ENCODE measurements at regions of chr6 and their contacts with region 1.

Region 1: DNA sequence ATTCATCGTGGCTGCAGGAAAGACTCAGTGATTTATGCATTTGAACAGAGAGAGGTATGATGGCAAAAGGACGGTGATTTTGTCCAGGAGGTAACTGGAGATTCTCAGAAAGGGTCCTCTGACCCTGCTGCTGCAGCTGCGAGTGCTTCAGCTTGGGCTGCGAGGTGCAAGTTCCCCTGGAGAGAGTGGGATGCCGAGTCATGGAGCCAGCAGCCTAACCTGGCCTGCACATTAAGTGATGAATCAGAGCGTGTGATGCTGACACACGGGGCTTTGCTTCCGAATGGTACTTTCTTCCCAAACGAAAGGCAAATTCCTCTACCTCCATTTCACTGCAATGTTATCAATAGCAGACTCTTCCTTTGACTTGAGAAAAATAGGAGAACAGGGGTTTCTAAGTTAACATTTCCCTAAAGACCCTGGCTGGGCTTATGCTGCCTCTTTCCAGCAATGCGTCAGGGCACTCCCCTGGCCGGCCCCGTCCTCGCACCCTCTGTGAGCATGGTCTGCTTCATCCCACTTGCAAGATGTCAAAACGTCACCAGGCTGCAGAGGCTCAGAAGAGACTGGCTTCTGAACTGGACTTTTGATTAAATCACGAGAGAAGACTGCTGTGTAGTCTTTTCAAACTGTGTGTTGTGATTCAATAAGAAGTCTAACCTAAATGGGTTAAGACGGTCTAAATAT is 628.0 kb upstream of the AGPAT4 start:
- DNase-seq: no peak
- H3K4me3 ChIP-seq: no peak overlapping the region
- H3K27ac ChIP-seq: no peak overlapping the region
- H3K4me1 ChIP-seq: no peaks in the 10 kb centered on the region
- H3K27me3 ChIP-seq: no peaks in the 10 kb centered on the region
- CTCF ChIP-seq: no peak
- POLR2A ChIP-seq: no peak

Region 2: GRCh38 chr6:161922631-161923119 is 20.8 kb after region 1 on chr6:
- intact Hi-C with region 1: no loop called
- DNase-seq: peak in 1 of 2 donors; percentile 21
- H3K4me3 ChIP-seq: no peak overlapping the region
- H3K27ac ChIP-seq: no peak overlapping the region
- H3K4me1 ChIP-seq: no peaks in the 10 kb centered on the region
- H3K27me3 ChIP-seq: no peaks in the 10 kb centered on the region
- CTCF ChIP-seq: no peak
- POLR2A ChIP-seq: no peak

Region 3: DNA sequence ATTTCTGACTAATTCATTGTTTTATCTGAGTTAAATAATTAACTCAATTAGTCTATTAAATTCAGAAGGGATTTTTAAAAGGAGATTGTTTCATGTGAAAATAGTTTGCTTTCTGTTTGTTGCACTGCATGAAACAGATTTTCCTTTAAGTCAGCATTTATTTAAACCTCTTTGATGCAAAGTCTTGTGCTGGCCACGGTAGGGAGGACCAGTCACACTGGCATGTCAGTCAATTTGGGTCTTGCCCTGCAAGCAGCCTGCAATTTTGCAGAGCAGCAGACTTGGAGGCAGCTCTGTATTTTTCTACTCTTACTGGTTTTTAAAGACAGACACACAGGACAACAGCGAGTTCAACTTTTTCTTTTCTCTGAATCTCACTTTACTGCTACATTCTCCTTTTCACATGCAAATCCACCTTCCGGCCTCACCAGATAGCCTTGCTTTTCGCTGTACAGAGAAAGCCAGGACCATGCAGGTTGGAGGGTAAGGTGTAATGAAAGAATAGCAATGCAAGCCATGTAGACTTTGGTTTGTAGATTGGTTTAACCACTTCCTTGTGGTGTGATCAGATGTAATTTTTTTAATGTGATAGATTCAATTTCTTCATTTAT is 61.9 kb after region 1 on chr6:
- intact Hi-C with region 1: loop called (anchors 2 kb)
- DNase-seq: no peak
- H3K4me3 ChIP-seq: no peak overlapping the region
- H3K27ac ChIP-seq: no peak overlapping the region
- H3K4me1 ChIP-seq: no peaks in the 10 kb centered on the region
- H3K27me3 ChIP-seq: no peaks in the 10 kb centered on the region
- CTCF ChIP-seq: no peak
- POLR2A ChIP-seq: no peak